ENCODE measurements at regions of chr9 and their contacts with region 1.

Region 1: DNA sequence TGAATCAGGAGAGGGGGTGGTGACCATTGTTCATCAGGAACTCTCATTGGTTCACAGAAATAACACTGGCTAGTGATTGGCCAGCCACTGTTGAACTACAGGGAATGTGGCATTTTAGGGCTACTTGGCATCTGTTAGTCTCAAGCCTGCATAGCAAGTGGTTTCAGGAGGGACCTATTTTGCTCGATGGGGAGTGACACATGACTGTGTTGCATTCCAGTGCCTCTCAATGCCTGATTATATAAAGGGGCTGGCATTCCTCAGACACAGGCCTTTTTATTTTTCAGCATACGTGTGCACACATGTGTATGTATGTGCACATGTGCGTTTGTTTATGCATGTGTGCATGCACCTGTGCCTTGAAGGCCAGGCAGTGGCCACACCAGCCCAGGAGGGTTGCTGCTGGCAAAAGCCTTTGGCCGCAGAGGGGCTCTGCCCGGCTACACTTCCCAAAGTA is 23.2 kb downstream of the FGD3 start:
- DNase-seq: no peak
- H3K4me3 ChIP-seq: no peak overlapping the region
- H3K27ac ChIP-seq: no peak overlapping the region
- H3K27me3 ChIP-seq: peaks cover 4% of the 10 kb centered on the region
- CTCF ChIP-seq: no peak

Region 2: DNA sequence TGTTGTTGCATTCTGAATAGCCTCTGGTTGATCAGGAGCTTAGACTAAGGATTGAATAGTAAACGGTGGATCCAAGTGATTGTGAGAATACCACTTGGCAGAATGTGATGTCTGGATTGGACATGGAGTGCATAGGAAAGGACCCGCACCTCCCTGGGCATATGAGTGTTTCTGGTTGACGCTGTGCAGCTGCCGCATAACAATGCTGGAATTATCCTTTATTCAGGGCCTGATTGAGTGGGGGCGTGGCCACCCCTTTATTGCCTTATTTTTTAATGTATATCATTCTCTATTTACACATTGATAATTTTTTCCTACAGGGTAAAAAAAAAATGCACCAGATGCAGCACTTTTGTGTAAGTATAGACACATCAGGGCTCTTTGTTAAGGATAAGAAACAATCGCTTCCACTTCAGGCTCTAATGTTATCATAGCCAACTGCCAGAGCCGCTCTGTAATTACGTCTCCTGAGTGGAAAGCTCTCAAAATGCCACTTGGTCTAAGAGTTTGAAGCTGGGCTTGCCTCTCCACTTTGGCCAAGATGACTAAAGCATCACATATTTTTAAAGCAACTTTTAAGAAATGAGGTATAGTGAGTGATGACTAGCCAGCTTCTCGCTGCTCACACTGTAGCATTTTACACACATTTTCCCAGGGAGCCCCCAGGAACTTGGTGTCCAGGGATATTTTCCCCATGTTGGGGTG is 17.4 kb before region 1 on chr9:
- CTCF ChIA-PET with region 1: interaction called, 12 read pairs
- POLR2A ChIA-PET with region 1: no interaction called
- DNase-seq: no peak
- H3K4me3 ChIP-seq: no peak overlapping the region
- H3K27ac ChIP-seq: no peak overlapping the region
- H3K27me3 ChIP-seq: peaks cover 18% of the 10 kb centered on the region
- CTCF ChIP-seq: no peak